Activated CD8-positive, alpha-beta T cell treated with anti-CD3 and anti-CD28 coated beads, Interleukin-2, amount 10 ng/mL, durations not matched to agents 7 days and 5 days (primary cell): ENCODE measurements at regions of chr7 and their contacts with region 1.

Region 1: DNA sequence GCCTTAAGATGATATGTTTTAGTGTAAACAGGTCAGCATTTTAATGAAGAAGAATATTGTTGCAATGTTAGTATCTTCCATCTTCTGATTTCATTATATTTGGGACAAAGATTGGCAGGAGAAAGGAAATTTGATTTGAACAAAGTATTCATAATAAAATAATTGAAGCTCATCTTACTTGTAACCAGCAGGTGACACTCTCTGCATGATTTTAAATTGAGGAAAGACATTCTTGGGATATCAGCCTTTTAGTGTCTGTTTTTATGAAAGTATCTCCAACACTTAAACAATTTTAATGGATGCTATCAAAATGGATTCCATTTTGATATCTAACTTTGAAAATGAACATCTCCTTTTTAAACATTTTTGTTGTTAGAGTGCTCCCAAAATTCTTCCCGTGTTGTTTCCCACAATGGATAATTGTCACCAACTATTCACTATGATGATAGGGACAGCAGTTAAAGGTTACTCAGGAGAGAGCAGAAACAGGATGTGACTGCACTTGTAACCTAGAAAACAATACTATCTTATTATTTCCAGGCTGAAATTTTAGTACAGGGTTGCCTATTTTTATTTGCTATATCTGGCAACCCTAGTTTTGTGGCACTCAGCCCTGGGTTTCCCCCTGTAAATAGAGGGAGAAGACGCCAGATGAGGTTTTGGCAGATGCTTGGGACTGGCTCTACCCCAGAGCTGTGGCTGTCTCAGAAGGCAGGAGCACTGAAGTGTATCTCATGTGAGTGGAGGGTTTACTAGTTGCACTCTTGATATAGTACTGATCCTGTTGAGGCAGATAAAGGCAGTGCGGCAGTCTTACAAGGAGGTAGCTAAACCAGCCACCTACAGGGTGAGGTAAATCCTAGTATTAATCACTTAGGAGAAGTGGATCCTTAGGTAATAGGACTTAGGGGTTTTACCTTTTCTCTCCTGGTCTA is 31.0 kb upstream of the ABCB4 start:
- DNase-seq: no peak
- ATAC-seq: no peak
- H3K4me3 Mint-ChIP-seq: no peak overlapping the region
- H3K27ac Mint-ChIP-seq: no peak overlapping the region
- H3K4me1 Mint-ChIP-seq: peaks cover 9% of the 10 kb centered on the region
- H3K27me3 Mint-ChIP-seq: no peaks in the 10 kb centered on the region

Region 2: DNA sequence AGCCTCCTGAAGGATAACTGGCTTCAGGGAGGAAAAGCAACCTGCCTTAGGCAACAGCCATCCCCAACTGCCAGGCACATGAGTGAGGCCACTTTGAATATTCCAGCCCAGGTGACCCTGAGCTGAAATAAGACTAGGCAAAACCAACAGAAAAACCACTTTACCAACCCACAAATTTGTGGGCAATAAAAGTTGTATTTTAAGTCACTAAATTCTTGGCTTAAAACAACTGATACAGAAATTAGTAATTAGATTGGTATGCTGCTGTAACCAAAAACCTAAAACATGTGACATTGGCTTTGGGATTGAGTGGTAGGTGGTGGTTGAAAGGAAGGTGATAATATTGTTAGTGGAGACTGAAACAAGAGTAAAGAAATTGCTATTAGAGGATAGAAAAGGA is 71.0 kb before region 1 on chr7:
- CTCF ChIA-PET with region 1: no interaction called
- POLR2A ChIA-PET with region 1: no interaction called
- DNase-seq: no peak
- ATAC-seq: no peak
- H3K4me3 Mint-ChIP-seq: no peak overlapping the region
- H3K27ac Mint-ChIP-seq: no peak overlapping the region
- H3K4me1 Mint-ChIP-seq: no peaks in the 10 kb centered on the region
- H3K27me3 Mint-ChIP-seq: peaks cover 2% of the 10 kb centered on the region

Region 3: GRCh38 chr7:87600130-87601124 is 93.9 kb after region 1 on chr7 and contains the start of gene ABCB1:
- CTCF ChIA-PET with region 1: interaction called, 19 read pairs
- POLR2A ChIA-PET with region 1: no interaction called
- DNase-seq: peak; percentile 60
- ATAC-seq: peak; percentile 92
- H3K4me3 Mint-ChIP-seq: peak within 1 kb of the TSS; percentile 82
- H3K27ac Mint-ChIP-seq: peak within 1 kb of the TSS; percentile 41
- H3K4me1 Mint-ChIP-seq: peaks cover 31% of the 10 kb centered on the region
- H3K27me3 Mint-ChIP-seq: peaks cover 18% of the 10 kb centered on the region
- total RNA-seq, gene ABCB1: 2.8 to 4.8 TPM

Region 4: GRCh38 chr7:87886875-87887274 is 380.4 kb after region 1 on chr7:
- CTCF ChIA-PET with region 1: interaction called, 11 read pairs
- POLR2A ChIA-PET with region 1: no interaction called
- DNase-seq: no peak
- ATAC-seq: no peak
- H3K4me3 Mint-ChIP-seq: no peak overlapping the region
- H3K27ac Mint-ChIP-seq: no peak overlapping the region
- H3K4me1 Mint-ChIP-seq: peaks cover 13% of the 10 kb centered on the region
- H3K27me3 Mint-ChIP-seq: no peaks in the 10 kb centered on the region